GM12878 (cell line): ENCODE measurements at regions of chr3 and their contacts with region 1.

Region 1: DNA sequence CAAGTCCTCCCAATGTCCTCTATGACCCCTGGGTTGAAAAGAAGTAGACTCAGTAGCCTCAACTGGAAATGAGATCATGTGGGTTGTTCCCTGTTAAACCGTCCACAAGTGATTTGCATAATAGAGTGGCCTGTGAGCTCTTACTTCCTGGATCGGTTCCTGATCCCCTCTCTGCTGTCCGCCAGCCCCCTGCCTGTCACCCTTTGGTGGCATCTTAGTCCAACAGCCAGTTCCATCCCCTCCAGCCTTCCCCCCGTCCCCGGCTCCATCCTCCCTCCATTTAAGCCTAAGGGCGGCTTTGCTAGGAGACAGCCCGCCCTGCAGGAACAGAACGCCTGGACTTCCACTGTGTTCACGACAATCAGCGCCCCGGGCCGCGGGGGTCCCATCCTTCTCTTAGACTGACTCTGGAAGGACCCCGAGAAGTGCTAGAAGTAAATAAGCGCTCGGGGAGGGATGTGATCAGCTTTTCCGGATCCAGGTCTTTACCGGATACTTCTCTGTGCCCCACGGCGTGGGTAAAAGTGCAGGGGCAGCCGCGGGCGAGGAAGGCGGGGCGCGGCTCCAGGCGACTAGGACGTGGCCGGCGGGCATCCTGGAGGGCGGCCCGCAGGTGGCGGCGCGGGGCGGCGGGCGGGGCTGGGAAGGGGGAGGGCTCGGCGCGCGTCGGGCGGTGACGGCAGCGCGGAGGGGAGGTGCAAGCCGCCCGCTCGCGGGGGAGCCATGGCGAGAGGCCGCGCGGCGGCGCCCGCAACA is 51.2 kb upstream of the ULK4 start:
- DNase-seq: peak; percentile 86
- ATAC-seq: peak; percentile 83
- H3K4me3 ChIP-seq: peak overlapping the region; percentile 99
- H3K27ac ChIP-seq: peak overlapping the region; percentile 93
- H3K4me1 ChIP-seq: peaks cover 16% of the 10 kb centered on the region
- H3K27me3 ChIP-seq: no peaks in the 10 kb centered on the region
- CTCF ChIP-seq: peak in 2 of 3 experiments; percentile 2 to 15; a peak in 1 of 6 replicates
- EP300 ChIP-seq: peak; percentile 69 to 78; a peak in 2 of 4 replicates
- POLR2A ChIP-seq: peak; percentile 88
- RAD21 ChIP-seq: no peak

Region 2: GRCh38 chr3:41900265-41900664 is 112.8 kb before region 1 on chr3:
- CTCF ChIA-PET with region 1: no interaction called
- POLR2A ChIA-PET with region 1: interaction called, 5 read pairs
- RAD21 ChIA-PET with region 1: interaction called, 3 read pairs
- SMC1A ChIA-PET with region 1: interaction called, 5 read pairs
- in situ Hi-C with region 1: no loop called
- intact Hi-C with region 1: loop called (anchors 5 kb)
- DNase-seq: no peak
- ATAC-seq: no peak
- H3K4me3 ChIP-seq: no peak overlapping the region
- H3K27ac ChIP-seq: no peak overlapping the region
- H3K4me1 ChIP-seq: no peaks in the 10 kb centered on the region
- H3K27me3 ChIP-seq: no peaks in the 10 kb centered on the region
- CTCF ChIP-seq: no peak
- EP300 ChIP-seq: no peak
- POLR2A ChIP-seq: no peak
- RAD21 ChIP-seq: no peak

Region 3: GRCh38 chr3:41933146-41933676 is 79.9 kb before region 1 on chr3:
- CTCF ChIA-PET with region 1: no interaction called
- POLR2A ChIA-PET with region 1: no interaction called
- RAD21 ChIA-PET with region 1: no interaction called
- SMC1A ChIA-PET with region 1: no interaction called
- in situ Hi-C with region 1: no loop called
- intact Hi-C with region 1: no loop called
- DNase-seq: no peak
- ATAC-seq: no peak
- H3K4me3 ChIP-seq: no peak overlapping the region
- H3K27ac ChIP-seq: no peak overlapping the region
- H3K4me1 ChIP-seq: no peaks in the 10 kb centered on the region
- H3K27me3 ChIP-seq: no peaks in the 10 kb centered on the region
- CTCF ChIP-seq: no peak
- EP300 ChIP-seq: no peak
- POLR2A ChIP-seq: no peak
- RAD21 ChIP-seq: no peak

Region 4: GRCh38 chr3:42025370-42026138 is 12.4 kb after region 1 on chr3:
- CTCF ChIA-PET with region 1: interaction called, 18 read pairs
- POLR2A ChIA-PET with region 1: interaction called, 50 read pairs
- RAD21 ChIA-PET with region 1: interaction called, 25 read pairs
- SMC1A ChIA-PET with region 1: interaction called, 56 read pairs
- in situ Hi-C with region 1: no loop called
- intact Hi-C with region 1: no loop called
- DNase-seq: no peak
- ATAC-seq: peak; percentile 70
- H3K4me3 ChIP-seq: peak overlapping the region; percentile 61
- H3K27ac ChIP-seq: peak overlapping the region; percentile 67
- H3K4me1 ChIP-seq: peaks cover 20% of the 10 kb centered on the region
- H3K27me3 ChIP-seq: no peaks in the 10 kb centered on the region
- CTCF ChIP-seq: no peak
- EP300 ChIP-seq: no peak
- POLR2A ChIP-seq: no peak
- RAD21 ChIP-seq: no peak

Region 5: DNA sequence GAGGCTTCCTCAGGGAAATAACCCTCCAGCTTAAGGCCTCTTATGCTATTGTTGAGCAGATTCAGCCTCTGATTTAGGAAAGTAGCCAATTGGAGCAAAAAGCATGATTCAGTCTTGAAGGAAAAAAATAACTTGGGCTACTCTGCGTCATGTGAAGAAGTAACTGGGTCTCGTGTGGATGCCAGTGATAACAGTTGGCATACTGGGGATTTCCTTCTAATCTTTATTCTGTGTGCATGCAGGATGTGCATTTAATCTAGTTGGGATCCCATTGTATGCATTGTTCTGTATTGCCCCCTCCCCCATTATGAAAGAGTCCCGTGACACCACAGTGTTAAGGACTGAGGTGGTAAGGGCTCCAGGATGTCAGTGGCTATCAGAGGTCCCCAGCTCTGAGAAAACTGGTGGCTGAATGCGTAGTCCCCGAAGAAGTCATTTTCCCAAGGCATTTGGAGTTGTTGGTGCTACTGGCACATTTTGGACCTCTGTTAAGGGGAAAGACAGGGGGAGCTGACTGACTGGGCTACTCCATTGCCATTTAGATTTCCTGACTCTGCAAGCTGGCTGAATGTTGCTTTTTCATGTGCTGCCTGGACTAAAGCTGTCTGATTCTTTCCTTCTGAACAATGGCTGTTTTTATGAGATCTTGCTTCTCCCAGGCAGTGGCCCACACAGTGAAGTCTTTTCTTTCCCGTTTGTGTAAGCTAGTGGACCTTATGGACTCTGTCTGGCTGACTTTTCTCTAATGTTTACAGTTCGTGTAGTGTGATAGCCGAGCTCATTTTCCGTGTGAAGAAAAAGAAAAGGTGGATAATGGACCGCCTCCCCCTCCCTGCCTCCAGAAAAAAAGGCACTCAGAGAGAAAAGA is 39.6 kb after region 1 on chr3:
- CTCF ChIA-PET with region 1: interaction called, 15 read pairs
- POLR2A ChIA-PET with region 1: interaction called, 15 read pairs
- RAD21 ChIA-PET with region 1: interaction called, 9 read pairs
- SMC1A ChIA-PET with region 1: interaction called, 109 read pairs
- in situ Hi-C with region 1: no loop called
- intact Hi-C with region 1: loop called (anchors 5 kb)
- DNase-seq: no peak
- ATAC-seq: no peak
- H3K4me3 ChIP-seq: no peak overlapping the region
- H3K27ac ChIP-seq: peak overlapping the region; percentile 57
- H3K4me1 ChIP-seq: peaks cover 38% of the 10 kb centered on the region
- H3K27me3 ChIP-seq: no peaks in the 10 kb centered on the region
- CTCF ChIP-seq: no peak
- EP300 ChIP-seq: no peak
- POLR2A ChIP-seq: no peak
- RAD21 ChIP-seq: no peak

Region 6: GRCh38 chr3:42090973-42091731 is 78.0 kb after region 1 on chr3 and contains the start of gene TRAK1:
- CTCF ChIA-PET with region 1: interaction called, 8 read pairs
- POLR2A ChIA-PET with region 1: interaction called, 14 read pairs
- RAD21 ChIA-PET with region 1: interaction called, 23 read pairs
- SMC1A ChIA-PET with region 1: interaction called, 35 read pairs
- in situ Hi-C with region 1: no loop called
- intact Hi-C with region 1: no loop called
- DNase-seq: no peak
- ATAC-seq: no peak
- H3K4me3 ChIP-seq: peak within 1 kb of the TSS; percentile 23; the same call in 1 of the 2 replicates
- H3K27ac ChIP-seq: peak within 1 kb of the TSS; percentile 63
- H3K4me1 ChIP-seq: peaks cover 79% of the 10 kb centered on the region
- H3K27me3 ChIP-seq: no peaks in the 10 kb centered on the region
- CTCF ChIP-seq: no peak
- EP300 ChIP-seq: no peak
- POLR2A ChIP-seq: no peak
- RAD21 ChIP-seq: no peak
- polyA plus RNA-seq, gene TRAK1: 6.6 to 6.7 TPM